Psoas muscle (tissue), 8 donors: ENCODE measurements at regions of chr3 and their contacts with region 1.

Region 1: GRCh38 chr3:11651900-11652299 is 8.2 kb upstream of the VGLL4 start:
- DNase-seq: no peak
- ATAC-seq: peak in 2 of 4 donors; percentile 47 to 74
- H3K4me3 ChIP-seq: no peak overlapping the region
- H3K27ac ChIP-seq: no peak overlapping the region
- H3K4me1 ChIP-seq: peaks cover 3% of the 10 kb centered on the region
- H3K27me3 ChIP-seq: no peaks in the 10 kb centered on the region
- CTCF ChIP-seq: peak; percentile 73

Region 2: GRCh38 chr3:11323813-11324212 is 328.1 kb before region 1 on chr3:
- intact Hi-C with region 1: no loop called
- DNase-seq: no peak
- ATAC-seq: no peak
- H3K4me3 ChIP-seq: no peak overlapping the region
- H3K27ac ChIP-seq: no peak overlapping the region
- H3K4me1 ChIP-seq: no peaks in the 10 kb centered on the region
- H3K27me3 ChIP-seq: no peaks in the 10 kb centered on the region
- CTCF ChIP-seq: no peak

Region 3: GRCh38 chr3:11610044-11610671 is 41.7 kb before region 1 on chr3:
- intact Hi-C with region 1: no loop called
- DNase-seq: peak; percentile 37 to 57
- ATAC-seq: peak; percentile 48 to 65 (median 54)
- H3K4me3 ChIP-seq: peak overlapping the region; percentile 33
- H3K27ac ChIP-seq: peak overlapping the region; percentile 57
- H3K4me1 ChIP-seq: peaks cover 91% of the 10 kb centered on the region
- H3K27me3 ChIP-seq: no peaks in the 10 kb centered on the region
- CTCF ChIP-seq: no peak

Region 4: DNA sequence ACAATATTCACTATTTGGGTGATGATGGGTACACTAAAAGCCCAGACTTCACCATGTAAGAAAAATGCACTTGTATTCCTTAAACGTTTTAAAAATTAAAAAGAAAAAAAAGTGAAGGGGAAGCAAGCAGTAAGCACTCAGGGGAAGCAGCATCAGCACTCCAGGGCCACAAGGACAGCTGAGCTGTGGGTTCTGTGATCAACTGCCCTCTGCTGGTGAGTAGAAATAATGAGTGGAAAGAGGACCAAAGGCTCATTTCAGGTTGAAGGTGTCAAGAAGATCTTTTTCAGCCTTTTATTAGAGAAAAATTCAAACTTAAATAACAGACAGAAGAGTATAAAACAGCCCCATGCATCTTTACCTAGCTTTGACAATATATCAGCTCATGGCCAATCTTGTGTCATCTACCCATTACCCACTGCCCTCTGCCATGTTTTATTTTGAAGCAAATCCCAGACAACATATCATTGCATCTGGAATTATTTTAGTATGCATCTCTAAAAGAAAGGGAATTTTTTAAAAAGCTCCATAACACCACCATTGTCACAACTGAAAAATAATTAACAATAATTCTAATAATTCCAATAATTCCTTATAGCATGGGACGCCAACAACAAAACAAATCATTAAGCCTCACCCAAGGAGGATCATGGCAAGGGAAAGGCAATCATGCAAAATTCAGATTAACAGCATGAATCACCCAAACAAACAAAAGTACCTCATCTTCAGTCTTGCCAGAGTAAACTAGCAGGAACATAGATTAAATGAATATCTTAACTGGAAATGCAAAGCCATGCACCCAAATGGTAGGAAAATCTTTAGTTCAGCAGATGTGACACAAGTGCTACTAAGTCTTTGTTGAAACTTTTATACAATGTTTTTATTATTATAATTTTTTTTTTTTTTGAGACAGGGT is 152.3 kb after region 1 on chr3:
- intact Hi-C with region 1: loop called (anchors 5 kb)
- DNase-seq: peak; percentile 21 to 59
- ATAC-seq: peak; percentile 68 to 92 (median 79)
- H3K4me3 ChIP-seq: no peak overlapping the region
- H3K27ac ChIP-seq: no peak overlapping the region
- H3K4me1 ChIP-seq: no peaks in the 10 kb centered on the region
- H3K27me3 ChIP-seq: no peaks in the 10 kb centered on the region
- CTCF ChIP-seq: peak; percentile 79